Psoas muscle (tissue), 8 donors: ENCODE measurements at regions of chr18 and their contacts with region 1.

Region 1: DNA sequence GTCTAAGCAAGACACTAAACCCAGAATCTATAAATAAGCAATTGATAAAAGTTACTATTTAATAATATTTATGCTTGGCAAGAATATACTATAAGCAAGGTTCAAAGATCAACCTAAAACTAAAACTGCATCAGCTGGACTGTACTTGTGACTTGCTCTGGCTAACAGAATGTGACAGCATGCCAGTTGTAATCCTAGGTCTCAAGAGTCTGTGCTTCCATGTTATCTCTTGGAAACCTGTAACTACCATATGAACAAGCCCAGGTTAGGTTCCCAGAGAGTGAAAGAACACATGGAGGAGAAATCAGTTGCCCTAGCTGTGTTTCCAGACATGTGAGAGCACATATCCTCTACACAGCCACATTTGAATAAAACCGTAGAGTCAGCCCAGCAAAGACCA is 297.4 kb downstream of the CDH2 start:
- DNase-seq: no peak
- ATAC-seq: no peak
- H3K4me3 ChIP-seq: no peak overlapping the region
- H3K27ac ChIP-seq: no peak overlapping the region
- H3K4me1 ChIP-seq: no peaks in the 10 kb centered on the region
- H3K27me3 ChIP-seq: no peaks in the 10 kb centered on the region
- CTCF ChIP-seq: no peak

Region 2: DNA sequence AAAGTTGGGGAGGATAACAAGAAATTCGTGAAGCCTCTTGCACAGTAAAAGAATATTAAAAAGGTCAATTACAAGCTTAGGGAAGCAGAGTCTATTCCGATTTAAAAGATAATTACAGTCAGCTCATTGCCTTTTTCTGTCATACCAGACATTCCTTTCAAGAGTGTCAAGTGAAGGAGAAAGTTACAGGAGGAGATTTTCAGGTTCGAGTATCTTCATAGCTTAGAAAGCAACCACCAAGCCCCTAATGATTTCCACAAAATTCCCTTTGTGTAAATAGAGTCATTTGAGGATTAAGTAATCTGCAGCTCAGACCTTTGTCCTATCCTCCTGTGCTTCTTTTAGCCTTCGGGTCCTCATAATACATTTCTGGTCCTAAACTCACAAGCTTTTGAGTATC is 117.5 kb before region 1 on chr18:
- intact Hi-C with region 1: loop called in 1 of 2 experiments (anchors 5 kb)
- DNase-seq: no peak
- ATAC-seq: no peak
- H3K4me3 ChIP-seq: no peak overlapping the region
- H3K27ac ChIP-seq: no peak overlapping the region
- H3K4me1 ChIP-seq: no peaks in the 10 kb centered on the region
- H3K27me3 ChIP-seq: peaks cover 0 to 2% (median 0%) of the 10 kb centered on the region in 3 donors
- CTCF ChIP-seq: no peak